Transverse colon (tissue), 4 donors: ENCODE measurements at regions of chr1 and their contacts with region 1.

Region 1: GRCh38 chr1:183281553-183282091 is 95.6 kb downstream of the LAMC2 start:
- DNase-seq: peak; percentile 89
- H3K4me3 ChIP-seq: no peak overlapping the region
- H3K27ac ChIP-seq: peak overlapping the region; percentile 14 to 76 (median 68)
- H3K4me1 ChIP-seq: peaks cover 0 to 20% (median 5%) of the 10 kb centered on the region in 4 donors
- H3K27me3 ChIP-seq: no peaks in the 10 kb centered on the region
- CTCF ChIP-seq: peak; percentile 88 to 93 (median 90)
- EP300 ChIP-seq: no peak
- POLR2A ChIP-seq: no peak

Region 2: DNA sequence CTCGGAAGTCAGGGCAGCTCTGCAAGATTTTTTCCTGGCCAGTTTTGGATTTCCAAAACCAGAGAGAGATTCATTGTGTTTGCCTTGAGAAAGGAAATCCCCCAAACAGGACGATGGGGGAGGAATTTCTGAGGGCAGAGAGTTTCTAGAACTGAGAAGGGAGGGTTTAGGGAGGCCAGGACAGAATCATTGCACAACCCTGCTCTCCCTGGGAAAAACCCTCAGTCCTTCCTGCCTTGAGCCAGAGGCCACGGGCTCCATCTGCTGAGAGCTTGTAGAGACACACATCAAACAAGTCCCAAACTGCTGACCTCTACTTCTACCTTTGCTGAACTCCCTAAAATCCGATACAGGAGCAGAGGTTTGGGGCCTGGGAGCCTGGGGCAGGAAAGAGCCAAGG is 36.8 kb after region 1 on chr1:
- in situ Hi-C with region 1: no loop called
- intact Hi-C with region 1: loop called (anchors 5 kb)
- DNase-seq: peak; percentile 52
- H3K4me3 ChIP-seq: no peak overlapping the region
- H3K27ac ChIP-seq: peak overlapping the region; percentile 40 to 81 (median 54)
- H3K4me1 ChIP-seq: peaks cover 5 to 16% (median 10%) of the 10 kb centered on the region in 4 donors
- H3K27me3 ChIP-seq: no peaks in the 10 kb centered on the region
- CTCF ChIP-seq: peak in 4 of 5 experiments; percentile 30 to 48 (median 35)
- EP300 ChIP-seq: no peak
- POLR2A ChIP-seq: no peak

Region 3: GRCh38 chr1:183543619-183544204 is 262.1 kb after region 1 on chr1:
- in situ Hi-C with region 1: loop called in 3 of 4 experiments (anchors 10 to 25 kb)
- intact Hi-C with region 1: no loop called
- DNase-seq: no peak
- H3K4me3 ChIP-seq: no peak overlapping the region
- H3K27ac ChIP-seq: no peak overlapping the region
- H3K4me1 ChIP-seq: peaks cover 0 to 8% (median 2%) of the 10 kb centered on the region in 4 donors
- H3K27me3 ChIP-seq: no peaks in the 10 kb centered on the region
- CTCF ChIP-seq: peak; percentile 58 to 72 (median 68)
- EP300 ChIP-seq: no peak
- POLR2A ChIP-seq: no peak

Region 4: DNA sequence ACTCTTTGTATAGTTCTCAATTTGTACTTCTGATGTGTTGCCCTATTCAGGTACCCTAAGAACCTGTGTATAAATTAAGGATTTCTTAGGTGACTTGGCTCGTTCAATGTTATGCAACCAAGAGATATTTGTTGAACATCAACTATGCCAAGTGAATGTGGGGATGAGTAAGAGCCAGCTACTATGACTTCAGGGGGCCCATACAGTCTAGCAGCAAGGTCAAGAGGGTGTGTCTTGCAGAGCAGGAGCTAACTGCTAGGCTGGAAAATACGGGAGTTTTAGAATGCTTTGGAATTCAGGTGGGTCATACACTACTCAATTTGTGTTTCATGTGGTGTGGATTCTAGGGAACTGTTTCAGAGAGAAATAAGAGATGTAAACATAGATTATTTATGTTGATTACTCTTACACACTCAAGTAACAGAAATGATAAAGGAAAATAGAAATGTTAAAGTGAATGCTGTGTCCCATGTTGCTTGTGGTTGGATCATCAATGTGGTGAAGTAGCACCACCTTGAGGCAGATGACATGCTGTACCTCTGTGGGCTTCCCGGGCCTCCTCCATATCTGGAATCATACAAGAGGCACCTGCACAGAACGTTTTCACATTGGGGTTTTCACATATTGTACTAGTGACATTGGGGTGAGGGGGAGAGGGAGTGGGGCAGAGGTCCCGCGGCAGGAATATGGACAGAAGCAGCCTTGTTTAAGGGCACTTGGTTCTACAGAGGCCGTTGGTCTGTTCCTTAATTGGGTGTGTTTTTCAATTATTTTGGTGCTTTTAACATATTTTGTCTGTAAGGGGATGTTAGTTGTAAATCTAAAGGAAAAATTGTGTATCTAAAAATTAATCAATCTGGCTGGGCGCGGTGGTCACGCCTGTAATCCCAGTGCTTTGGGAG is 341.5 kb after region 1 on chr1:
- in situ Hi-C with region 1: loop called in 1 of 4 experiments (anchors 10 kb)
- intact Hi-C with region 1: loop called (anchors 10 kb)
- DNase-seq: peak; percentile 61
- H3K4me3 ChIP-seq: no peak overlapping the region
- H3K27ac ChIP-seq: peak overlapping the region in 2 of 4 donors; percentile 15 to 52
- H3K4me1 ChIP-seq: peaks cover 8 to 27% (median 13%) of the 10 kb centered on the region in 4 donors
- H3K27me3 ChIP-seq: no peaks in the 10 kb centered on the region
- CTCF ChIP-seq: peak; percentile 59 to 69 (median 64)
- EP300 ChIP-seq: no peak
- POLR2A ChIP-seq: no peak